Mammary epithelial cell (primary cell): ENCODE measurements at regions of chr7 and their contacts with region 1.

Region 1: GRCh38 chr7:17298207-17298839 is at the start of gene AHR:
- DNase-seq: peak; percentile 87
- H3K4me3 ChIP-seq: peak within 1 kb of the TSS; percentile 71 to 94 (median 93)
- H3K27ac ChIP-seq: peak within 1 kb of the TSS; percentile 90
- H3K4me1 ChIP-seq: peaks cover 12% of the 10 kb centered on the region
- H3K27me3 ChIP-seq: no peaks in the 10 kb centered on the region
- CTCF ChIP-seq: no peak
- total RNA-seq, gene AHR: 101 to 478 TPM

Region 2: GRCh38 chr7:16660702-16661464 is 637.4 kb before region 1 on chr7:
- CTCF ChIA-PET with region 1: no interaction called
- dilution Hi-C with region 1: no loop called
- in situ Hi-C with region 1: no loop called
- intact Hi-C with region 1: no loop called
- DNase-seq: peak; percentile 64
- H3K4me3 ChIP-seq: no peak overlapping the region
- H3K27ac ChIP-seq: no peak overlapping the region
- H3K4me1 ChIP-seq: peaks cover 19% of the 10 kb centered on the region
- H3K27me3 ChIP-seq: no peaks in the 10 kb centered on the region
- CTCF ChIP-seq: no peak

Region 3: GRCh38 chr7:16836481-16836880 is 461.8 kb before region 1 on chr7:
- CTCF ChIA-PET with region 1: no interaction called
- dilution Hi-C with region 1: no loop called
- in situ Hi-C with region 1: no loop called
- intact Hi-C with region 1: no loop called
- DNase-seq: no peak
- H3K4me3 ChIP-seq: no peak overlapping the region
- H3K27ac ChIP-seq: no peak overlapping the region
- H3K4me1 ChIP-seq: no peaks in the 10 kb centered on the region
- H3K27me3 ChIP-seq: no peaks in the 10 kb centered on the region
- CTCF ChIP-seq: no peak

Region 4: DNA sequence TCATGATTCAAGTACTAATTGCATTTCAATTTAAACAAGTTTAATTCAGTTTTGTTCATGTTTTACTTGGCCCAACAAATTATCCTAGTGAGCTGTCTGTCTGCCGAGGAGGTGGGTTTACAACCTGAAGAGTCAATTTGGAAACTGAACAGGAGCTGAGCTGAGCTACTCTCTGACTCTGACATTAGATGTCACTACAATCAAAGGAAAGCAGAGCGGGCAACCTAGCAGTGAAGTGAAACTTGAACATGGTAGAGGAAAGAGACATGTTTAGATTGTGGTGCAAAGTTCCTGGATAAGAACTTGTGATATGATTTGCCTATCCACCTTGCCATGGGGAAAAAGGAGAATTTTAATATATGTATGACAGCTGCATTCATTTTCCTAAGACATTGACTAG is 407.0 kb before region 1 on chr7:
- CTCF ChIA-PET with region 1: interaction called, 8 read pairs
- dilution Hi-C with region 1: no loop called
- in situ Hi-C with region 1: no loop called
- intact Hi-C with region 1: loop called (anchors 2 kb)
- DNase-seq: peak; percentile 56
- H3K4me3 ChIP-seq: no peak overlapping the region
- H3K27ac ChIP-seq: no peak overlapping the region
- H3K4me1 ChIP-seq: peaks cover 7% of the 10 kb centered on the region
- H3K27me3 ChIP-seq: no peaks in the 10 kb centered on the region
- CTCF ChIP-seq: peak; percentile 72 to 76

Region 5: DNA sequence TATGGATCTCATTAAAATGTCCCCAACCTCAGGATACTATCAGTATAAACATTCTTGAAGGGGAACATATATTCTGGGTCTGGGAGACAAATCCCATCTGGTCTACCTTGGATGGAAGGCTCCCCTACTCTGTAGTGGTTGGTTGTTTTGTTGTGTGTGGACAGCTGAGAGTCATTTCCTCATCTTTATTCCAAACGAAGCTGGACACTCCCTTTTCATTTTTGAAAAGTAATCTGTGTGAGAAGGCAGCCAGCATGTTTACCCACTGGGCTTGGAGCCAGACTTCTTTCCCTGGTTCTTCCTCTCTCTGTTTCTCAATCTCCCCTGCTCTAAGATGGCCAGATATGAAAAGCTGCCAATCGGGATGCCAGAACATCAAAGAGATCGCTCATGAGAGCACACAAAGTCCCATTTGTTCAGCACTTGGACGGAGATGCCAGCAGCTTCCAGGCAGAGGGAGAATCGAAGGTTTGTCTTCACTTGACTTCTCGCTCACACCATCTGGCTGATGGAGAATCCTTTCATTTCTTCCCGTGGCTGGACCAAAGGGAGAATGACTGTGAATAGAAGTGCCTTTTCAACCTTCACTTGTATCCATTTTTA is 308.4 kb before region 1 on chr7:
- CTCF ChIA-PET with region 1: no interaction called
- dilution Hi-C with region 1: no loop called
- in situ Hi-C with region 1: loop called (anchors 5 to 10 kb)
- intact Hi-C with region 1: no loop called
- DNase-seq: peak; percentile 94
- H3K4me3 ChIP-seq: peak overlapping the region; percentile 13 to 56 (median 47)
- H3K27ac ChIP-seq: peak overlapping the region; percentile 46
- H3K4me1 ChIP-seq: peaks cover 16% of the 10 kb centered on the region
- H3K27me3 ChIP-seq: no peaks in the 10 kb centered on the region
- CTCF ChIP-seq: no peak

Region 6: GRCh38 chr7:17063045-17063383 is 235.3 kb before region 1 on chr7:
- CTCF ChIA-PET with region 1: interaction called, 11 read pairs
- dilution Hi-C with region 1: no loop called
- in situ Hi-C with region 1: no loop called
- intact Hi-C with region 1: loop called (anchors 1 kb)
- DNase-seq: no peak
- H3K4me3 ChIP-seq: no peak overlapping the region
- H3K27ac ChIP-seq: no peak overlapping the region
- H3K4me1 ChIP-seq: peaks cover 1% of the 10 kb centered on the region
- H3K27me3 ChIP-seq: no peaks in the 10 kb centered on the region
- CTCF ChIP-seq: peak; percentile 37 to 46

Region 7: DNA sequence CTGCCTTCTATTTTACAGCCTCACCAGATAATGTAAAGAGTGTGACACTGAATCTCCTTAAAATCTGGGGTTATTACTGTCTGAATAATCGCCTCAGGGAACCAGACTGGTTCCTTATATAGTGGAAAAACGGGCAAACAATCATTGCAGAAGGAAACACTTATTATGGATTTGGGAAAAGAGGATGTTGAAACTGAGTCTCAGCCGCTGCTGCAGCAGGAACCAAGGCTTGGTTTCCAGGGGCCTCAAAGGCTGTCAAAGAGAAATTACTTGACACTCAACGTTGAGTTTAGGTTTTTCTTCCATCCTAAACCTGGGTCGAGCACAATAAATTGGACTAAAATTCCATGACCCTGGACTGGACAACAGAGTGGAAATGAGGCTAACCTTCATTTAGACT is 103.7 kb before region 1 on chr7:
- CTCF ChIA-PET with region 1: no interaction called
- dilution Hi-C with region 1: no loop called
- in situ Hi-C with region 1: no loop called
- intact Hi-C with region 1: loop called (anchors 5 kb)
- DNase-seq: no peak
- H3K4me3 ChIP-seq: no peak overlapping the region
- H3K27ac ChIP-seq: no peak overlapping the region
- H3K4me1 ChIP-seq: no peaks in the 10 kb centered on the region
- H3K27me3 ChIP-seq: no peaks in the 10 kb centered on the region
- CTCF ChIP-seq: no peak

Region 8: DNA sequence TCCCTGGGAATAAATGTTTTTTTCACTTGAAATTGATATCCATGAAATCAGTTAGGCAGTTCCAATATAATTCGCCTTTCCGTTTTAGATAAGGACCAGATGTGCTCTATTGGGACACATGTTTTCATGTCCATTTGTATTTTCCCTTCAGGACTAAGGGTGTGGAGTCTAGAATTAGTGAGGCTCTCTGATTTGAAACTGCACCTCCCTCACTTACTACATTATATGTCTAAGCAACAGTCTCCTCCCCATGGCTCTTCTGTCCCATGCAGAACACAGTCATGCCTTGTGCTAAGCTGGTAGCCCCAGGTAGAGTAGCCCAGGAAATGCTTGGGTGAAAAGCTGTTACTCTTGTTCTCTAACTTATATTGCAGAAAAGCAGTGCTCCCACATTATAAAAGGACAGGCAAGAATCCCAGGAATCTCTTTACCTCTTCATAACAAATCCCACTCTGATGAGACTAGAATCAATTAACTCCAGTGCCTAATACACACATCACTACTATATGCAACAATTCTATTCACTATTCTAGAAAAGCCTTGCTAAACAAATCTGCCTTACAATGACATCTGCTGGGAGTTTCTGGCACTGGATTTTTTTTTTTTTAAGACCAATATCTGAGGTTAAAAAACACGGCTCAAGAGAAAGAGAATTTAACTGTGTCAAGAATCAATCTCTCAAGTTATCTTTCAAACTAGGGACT is 348.1 kb after region 1 on chr7:
- CTCF ChIA-PET with region 1: interaction called, 9 read pairs
- dilution Hi-C with region 1: no loop called
- in situ Hi-C with region 1: no loop called
- intact Hi-C with region 1: loop called (anchors 1 kb)
- DNase-seq: peak; percentile 57
- H3K4me3 ChIP-seq: no peak overlapping the region
- H3K27ac ChIP-seq: no peak overlapping the region
- H3K4me1 ChIP-seq: peaks cover 8% of the 10 kb centered on the region
- H3K27me3 ChIP-seq: no peaks in the 10 kb centered on the region
- CTCF ChIP-seq: peak; percentile 40 to 53